Activated naive CD4-positive, alpha-beta T cell treated with anti-CD3 and anti-CD28 coated beads for 36 hours (primary cell): ENCODE measurements at regions of chr12 and their contacts with region 1.

Region 1: GRCh38 chr12:101773650-101774162 is 34.4 kb upstream of the SYCP3 start:
- DNase-seq: peak; percentile 78
- H3K4me3 Mint-ChIP-seq: no peak overlapping the region
- H3K27ac Mint-ChIP-seq: no peak overlapping the region
- H3K4me1 Mint-ChIP-seq: peaks cover 4% of the 10 kb centered on the region
- H3K27me3 Mint-ChIP-seq: no peaks in the 10 kb centered on the region

Region 2: DNA sequence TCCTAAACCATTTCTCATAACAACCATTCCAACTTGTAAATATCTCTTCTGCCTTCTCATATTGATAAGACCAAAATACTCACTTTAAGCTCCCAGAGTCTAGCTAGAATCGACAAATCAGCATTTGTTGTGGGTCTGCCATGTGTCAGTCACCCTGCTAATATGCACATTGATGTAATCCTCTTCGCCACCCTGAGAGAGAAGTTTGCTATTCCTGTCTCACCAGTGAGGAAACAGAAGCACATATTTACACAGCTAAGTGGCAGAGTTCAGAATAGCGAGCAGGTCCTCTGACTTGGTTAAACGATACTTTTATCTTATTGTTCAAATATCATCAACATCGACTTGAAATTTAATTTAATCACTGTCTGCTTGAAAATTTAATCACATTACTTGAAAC is 837.0 kb before region 1 on chr12:
- CTCF ChIA-PET with region 1: no interaction called
- intact Hi-C with region 1: no loop called
- DNase-seq: no peak
- H3K4me3 Mint-ChIP-seq: no peak overlapping the region
- H3K27ac Mint-ChIP-seq: no peak overlapping the region
- H3K4me1 Mint-ChIP-seq: no peaks in the 10 kb centered on the region
- H3K27me3 Mint-ChIP-seq: no peaks in the 10 kb centered on the region

Region 3: DNA sequence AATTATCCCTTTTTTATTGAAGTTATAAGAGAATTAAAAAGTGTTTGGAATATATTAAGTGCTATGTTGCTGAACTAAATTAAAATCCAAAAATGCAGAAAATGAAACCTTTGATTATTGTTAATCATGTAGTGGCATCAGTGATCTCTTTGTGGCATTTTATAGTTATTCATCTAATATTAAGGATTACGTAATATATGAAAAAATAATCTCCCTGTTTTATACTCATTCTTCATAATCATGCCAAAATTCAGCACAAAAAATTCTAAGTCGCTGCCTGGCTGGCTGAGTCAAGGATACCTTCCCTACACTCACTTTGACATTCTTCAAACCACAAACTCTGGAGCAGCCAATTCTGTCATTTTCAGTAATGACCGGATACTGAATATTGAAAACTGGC is 429.8 kb before region 1 on chr12:
- CTCF ChIA-PET with region 1: no interaction called
- intact Hi-C with region 1: no loop called
- DNase-seq: no peak
- H3K4me3 Mint-ChIP-seq: no peak overlapping the region
- H3K27ac Mint-ChIP-seq: no peak overlapping the region
- H3K4me1 Mint-ChIP-seq: no peaks in the 10 kb centered on the region
- H3K27me3 Mint-ChIP-seq: no peaks in the 10 kb centered on the region

Region 4: GRCh38 chr12:101414533-101415119 is 359.1 kb before region 1 on chr12:
- CTCF ChIA-PET with region 1: no interaction called
- intact Hi-C with region 1: loop called (anchors 5 kb)
- DNase-seq: peak; percentile 25
- H3K4me3 Mint-ChIP-seq: no peak overlapping the region
- H3K27ac Mint-ChIP-seq: no peak overlapping the region
- H3K4me1 Mint-ChIP-seq: no peaks in the 10 kb centered on the region
- H3K27me3 Mint-ChIP-seq: peaks cover 9% of the 10 kb centered on the region

Region 5: DNA sequence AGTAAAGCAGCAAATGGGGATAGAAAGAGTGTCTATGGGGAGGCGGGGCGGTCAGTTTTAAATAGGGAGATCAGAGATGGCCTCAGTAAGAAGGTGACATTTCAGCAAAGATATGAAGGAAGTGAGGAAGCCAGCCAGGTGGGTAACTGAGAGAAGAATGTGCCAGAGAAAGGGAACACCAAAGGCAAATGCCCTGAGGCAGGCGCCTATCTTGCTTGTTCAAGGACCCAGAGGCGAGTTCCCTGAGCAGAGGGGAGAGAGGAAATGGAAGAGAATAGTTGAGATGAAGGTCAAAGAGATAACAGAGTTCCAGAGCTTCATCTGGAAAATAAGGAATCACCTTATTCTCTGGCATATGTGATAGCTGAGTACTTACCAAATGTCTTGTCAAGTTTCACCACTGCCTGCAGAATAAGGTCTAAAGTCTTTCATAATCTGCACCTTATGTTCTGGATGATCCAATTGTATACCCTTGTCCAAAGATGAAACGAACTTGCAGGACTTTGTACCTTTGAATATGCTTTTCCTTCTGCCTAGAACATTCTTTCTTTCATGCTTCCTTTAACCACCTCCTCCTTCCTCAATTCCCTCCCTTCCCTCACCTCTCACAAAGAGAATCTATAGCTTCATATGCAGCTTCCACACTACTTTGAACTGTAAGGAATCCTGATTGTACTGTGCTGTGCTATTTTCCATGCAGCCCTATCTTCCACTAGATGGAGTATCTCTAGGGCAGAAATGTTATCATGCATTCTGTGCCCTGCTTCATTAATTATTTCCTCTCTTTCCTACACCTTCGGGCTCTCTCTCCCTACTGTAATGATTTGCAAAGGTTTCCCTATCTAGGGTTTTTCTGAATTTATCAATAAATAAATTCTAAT is 18.6 kb after region 1 on chr12:
- CTCF ChIA-PET with region 1: interaction called, 27 read pairs
- intact Hi-C with region 1: no loop called
- DNase-seq: no peak
- H3K4me3 Mint-ChIP-seq: no peak overlapping the region
- H3K27ac Mint-ChIP-seq: no peak overlapping the region
- H3K4me1 Mint-ChIP-seq: peaks cover 22% of the 10 kb centered on the region
- H3K27me3 Mint-ChIP-seq: no peaks in the 10 kb centered on the region

Region 6: DNA sequence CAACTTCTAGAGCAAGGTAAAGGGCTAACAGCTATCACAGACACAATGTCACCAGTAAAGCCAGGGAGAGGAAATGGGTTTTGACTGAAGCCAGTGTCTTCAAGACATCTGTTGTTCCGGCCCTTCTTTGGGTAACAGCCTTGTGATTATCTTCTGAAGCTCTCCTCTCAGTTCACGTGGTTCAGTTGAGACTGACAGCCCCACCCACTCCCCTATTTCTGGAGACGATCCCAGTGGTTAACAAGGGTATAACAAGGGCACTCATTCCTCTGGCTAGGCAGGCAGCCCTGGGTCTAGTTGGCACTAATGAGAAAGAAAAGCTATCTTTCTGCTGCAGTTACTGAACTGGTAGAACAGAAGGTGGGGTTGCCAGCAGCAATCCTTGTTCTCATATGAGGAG is 50.2 kb after region 1 on chr12:
- CTCF ChIA-PET with region 1: interaction called, 24 read pairs
- intact Hi-C with region 1: no loop called
- DNase-seq: peak; percentile 74
- H3K4me3 Mint-ChIP-seq: no peak overlapping the region
- H3K27ac Mint-ChIP-seq: peak overlapping the region; percentile 48
- H3K4me1 Mint-ChIP-seq: peaks cover 76% of the 10 kb centered on the region
- H3K27me3 Mint-ChIP-seq: no peaks in the 10 kb centered on the region